Activated T-helper 2 cell treated with anti-CD3 and anti-CD28 coated beads, Interferon-gamma antibody, Interleukin-2, Interleukin-4, amounts not matched to agents 10 μg/mL and 5 μg/mL and 100 μg/mL, durations not matched to agents 14 hours and 24 hours and 36 hours (primary cell): ENCODE measurements at regions of chr6 and their contacts with region 1.

Region 1: GRCh38 chr6:149060300-149060997 is 257.1 kb upstream of the TAB2 start:
- DNase-seq: peak; percentile 63
- H3K4me3 Mint-ChIP-seq: peak overlapping the region; percentile 69
- H3K27ac Mint-ChIP-seq: peak overlapping the region; percentile 88
- H3K4me1 Mint-ChIP-seq: peaks cover 64% of the 10 kb centered on the region
- H3K27me3 Mint-ChIP-seq: no peaks in the 10 kb centered on the region

Region 2: DNA sequence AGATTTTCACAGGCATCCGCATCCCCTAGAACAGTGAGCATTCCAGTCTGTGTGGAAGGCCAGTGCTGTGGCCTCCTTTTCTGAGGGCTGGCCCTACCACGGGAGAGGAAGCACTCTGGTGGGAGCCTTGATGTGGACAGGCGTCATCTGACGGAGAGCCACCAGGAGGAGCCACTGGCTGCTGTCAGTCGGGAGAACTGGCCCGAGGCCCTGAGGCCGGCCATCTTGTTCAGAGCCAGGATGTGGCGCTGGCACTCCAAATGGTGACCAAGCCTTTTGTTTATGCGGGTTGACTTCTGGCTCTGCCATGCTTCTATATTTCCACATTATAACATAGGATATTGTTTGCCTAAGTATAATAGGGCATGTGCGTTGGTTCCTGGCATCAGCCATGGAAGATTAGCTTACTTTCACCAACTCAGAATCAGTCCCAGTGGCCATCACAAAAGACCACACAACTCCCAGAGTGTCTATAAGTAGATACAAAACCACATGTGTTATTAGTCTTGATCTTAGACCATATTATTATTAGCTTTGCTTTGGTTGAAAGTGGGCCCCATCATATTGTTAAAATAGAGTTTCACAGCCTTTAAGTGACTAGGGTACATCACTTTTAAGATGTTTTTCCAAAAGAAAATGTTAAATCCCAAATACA is 16.8 kb before region 1 on chr6:
- intact Hi-C with region 1: loop called (anchors 1 kb)
- DNase-seq: no peak
- H3K4me3 Mint-ChIP-seq: no peak overlapping the region
- H3K27ac Mint-ChIP-seq: no peak overlapping the region
- H3K4me1 Mint-ChIP-seq: peaks cover 48% of the 10 kb centered on the region
- H3K27me3 Mint-ChIP-seq: no peaks in the 10 kb centered on the region